Activated CD8-positive, alpha-beta T cell treated with anti-CD3 and anti-CD28 coated beads for 36 hours (primary cell): ENCODE measurements at regions of chr1 and their contacts with region 1.

Region 1: GRCh38 chr1:243748706-243749283 is 101.2 kb downstream of the AKT3 start:
- DNase-seq: peak; percentile 8
- ATAC-seq: peak; percentile 97
- H3K4me3 Mint-ChIP-seq: no peak overlapping the region
- H3K27ac Mint-ChIP-seq: no peak overlapping the region
- H3K4me1 Mint-ChIP-seq: peaks cover 34% of the 10 kb centered on the region
- H3K27me3 Mint-ChIP-seq: no peaks in the 10 kb centered on the region
- CTCF ChIP-seq: peak; percentile 73

Region 2: DNA sequence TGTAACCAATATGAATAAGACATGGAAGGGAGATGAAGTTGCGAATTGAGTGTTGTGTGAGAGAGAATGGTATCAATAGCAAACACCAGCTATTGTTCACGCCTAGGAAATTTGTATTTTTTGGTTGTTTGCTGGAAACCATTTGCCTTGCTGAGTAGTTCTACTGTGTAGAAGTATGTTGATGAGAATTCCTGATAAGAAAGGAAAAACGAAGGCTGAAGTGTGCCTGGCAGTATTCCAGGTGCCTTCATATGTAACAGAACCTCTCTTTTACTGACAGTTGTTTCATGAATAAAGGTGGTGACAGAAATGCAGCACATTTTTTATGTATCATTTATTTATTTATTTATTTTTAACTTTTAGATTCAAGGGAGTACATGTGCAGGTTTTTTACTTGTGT is 413.5 kb before region 1 on chr1:
- CTCF ChIA-PET with region 1: no interaction called
- POLR2A ChIA-PET with region 1: no interaction called
- intact Hi-C with region 1: loop called (anchors 5 kb)
- DNase-seq: no peak
- ATAC-seq: no peak
- H3K4me3 Mint-ChIP-seq: no peak overlapping the region
- H3K27ac Mint-ChIP-seq: no peak overlapping the region
- H3K4me1 Mint-ChIP-seq: peaks cover 8% of the 10 kb centered on the region
- H3K27me3 Mint-ChIP-seq: no peaks in the 10 kb centered on the region
- CTCF ChIP-seq: no peak

Region 3: DNA sequence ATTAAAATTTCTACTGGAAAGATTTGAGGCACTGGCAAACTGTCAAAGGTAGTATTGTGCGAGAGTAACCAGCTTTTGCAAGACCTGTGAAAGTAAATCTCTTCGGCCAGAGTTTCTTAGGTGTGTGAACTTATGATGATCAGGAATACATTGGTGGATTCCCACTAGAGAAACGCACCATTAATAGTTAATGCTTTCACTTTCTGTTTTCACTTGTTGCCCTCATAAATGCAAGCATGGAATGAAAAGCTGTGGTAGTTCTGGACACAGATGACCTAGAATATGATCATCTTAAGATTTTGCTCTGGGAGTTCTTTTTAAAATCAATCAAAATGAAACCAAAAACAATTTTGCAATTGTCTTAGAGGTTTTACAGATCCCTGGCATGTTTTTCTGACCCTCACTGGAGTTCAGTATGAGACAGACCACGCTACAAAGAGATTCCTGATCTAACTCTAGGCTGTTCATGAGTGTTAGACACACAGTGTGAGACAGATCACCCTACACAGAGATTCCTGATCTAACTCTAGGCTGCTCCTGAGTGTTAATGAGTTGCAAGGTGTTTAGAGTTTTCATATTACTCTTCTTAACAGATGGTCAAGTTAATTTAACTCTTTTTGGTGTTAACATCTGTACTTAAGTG is 394.2 kb before region 1 on chr1:
- CTCF ChIA-PET with region 1: no interaction called
- POLR2A ChIA-PET with region 1: no interaction called
- intact Hi-C with region 1: loop called (anchors 5 kb)
- DNase-seq: no peak
- ATAC-seq: peak; percentile 13
- H3K4me3 Mint-ChIP-seq: no peak overlapping the region
- H3K27ac Mint-ChIP-seq: no peak overlapping the region
- H3K4me1 Mint-ChIP-seq: peaks cover 15% of the 10 kb centered on the region
- H3K27me3 Mint-ChIP-seq: no peaks in the 10 kb centered on the region
- CTCF ChIP-seq: no peak

Region 4: DNA sequence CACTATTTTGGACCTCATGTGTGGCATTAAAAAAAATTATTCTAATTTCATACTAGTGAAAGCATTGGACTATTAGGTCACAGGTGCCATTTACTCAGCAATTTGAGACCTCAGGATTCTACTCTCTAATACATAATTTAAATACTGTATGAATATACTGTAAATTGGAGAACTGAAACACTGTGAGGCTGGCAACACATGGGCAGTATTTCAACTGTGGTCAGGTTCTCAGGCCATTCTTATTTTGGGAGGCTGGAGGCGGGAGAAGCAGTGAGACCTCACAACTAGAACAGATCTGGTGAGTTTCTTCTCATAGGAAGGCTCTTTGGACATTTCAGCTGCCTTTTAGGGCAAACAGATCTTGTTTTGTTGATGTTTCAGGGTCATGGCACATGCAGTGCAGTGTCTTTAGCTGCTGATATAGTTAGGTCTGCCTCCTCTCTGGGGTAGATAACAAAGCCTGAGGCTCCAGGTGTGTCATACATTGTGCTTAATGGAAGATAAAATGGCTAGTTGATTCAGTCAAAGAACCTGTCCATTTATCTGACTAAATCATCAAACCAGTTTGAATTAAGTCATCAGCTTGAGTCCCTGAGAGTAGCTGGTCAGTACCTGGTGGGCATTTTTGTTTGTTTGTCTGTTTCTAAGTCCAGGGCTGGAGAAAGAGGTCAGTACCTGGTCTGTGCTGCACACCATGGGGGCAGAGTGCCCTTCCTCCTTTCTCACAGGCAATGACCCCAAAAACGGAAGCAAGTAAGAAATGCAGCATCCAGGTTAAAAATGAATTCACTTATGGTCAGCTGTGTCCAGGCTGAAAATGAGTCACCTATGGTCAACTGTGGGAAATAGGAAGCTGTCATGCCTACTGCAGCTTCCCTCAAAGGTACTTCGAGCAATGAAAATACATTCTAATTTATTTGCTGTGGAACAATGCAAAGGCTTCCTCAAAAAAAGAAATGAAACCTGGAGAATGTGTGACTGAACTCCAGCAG is 276.7 kb before region 1 on chr1:
- CTCF ChIA-PET with region 1: interaction called, 3 read pairs
- POLR2A ChIA-PET with region 1: no interaction called
- intact Hi-C with region 1: loop called (anchors 10 kb)
- DNase-seq: no peak
- ATAC-seq: no peak
- H3K4me3 Mint-ChIP-seq: no peak overlapping the region
- H3K27ac Mint-ChIP-seq: no peak overlapping the region
- H3K4me1 Mint-ChIP-seq: peaks cover 10% of the 10 kb centered on the region
- H3K27me3 Mint-ChIP-seq: no peaks in the 10 kb centered on the region
- CTCF ChIP-seq: no peak